ENCODE measurements at regions of chr4 and their contacts with region 1.

Region 1: DNA sequence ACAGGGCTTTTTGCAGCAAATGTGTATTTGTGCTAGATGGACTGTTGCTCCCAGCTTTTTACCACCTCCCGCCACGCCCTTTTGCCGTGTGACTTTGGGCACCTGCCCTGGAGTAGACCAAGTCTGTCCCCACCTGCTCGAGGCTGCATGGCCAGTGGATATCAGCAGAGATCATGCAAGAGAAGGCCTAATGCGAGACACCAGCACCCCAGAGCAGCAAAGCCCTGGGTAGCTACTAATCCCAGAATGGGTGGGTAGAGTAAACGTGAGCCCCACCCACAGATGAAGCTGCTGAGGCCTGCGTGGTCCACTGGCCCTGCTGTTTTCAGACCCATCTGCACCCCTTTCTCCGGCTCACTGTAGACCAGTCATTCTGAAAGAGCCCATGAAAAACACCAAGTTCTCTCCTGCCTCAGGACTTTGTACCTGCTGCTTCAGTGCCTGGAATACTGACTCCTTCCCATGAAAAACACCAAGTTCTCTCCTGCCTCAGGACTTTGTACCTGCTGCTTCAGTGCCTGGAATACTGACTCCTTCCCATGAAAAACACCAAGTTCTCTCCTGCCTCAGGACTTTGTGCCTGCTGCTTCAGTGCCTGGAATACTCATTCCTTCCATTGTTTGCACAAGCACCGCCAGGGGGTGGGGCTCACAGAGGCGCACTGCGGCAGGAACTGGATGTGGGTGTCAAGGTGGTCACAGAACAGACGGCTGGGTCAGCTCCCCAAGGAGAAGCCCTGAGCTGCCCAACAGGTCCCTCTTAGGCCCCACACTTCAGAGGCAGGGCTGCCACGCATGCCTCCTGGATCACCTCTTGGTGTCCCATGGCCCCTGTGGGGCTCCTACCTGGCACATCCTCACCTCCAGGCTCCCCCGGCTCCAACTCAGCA is 5.1 kb upstream of the TNIP2 start:
- DNase-seq: no peak
- ATAC-seq: peak in 1 of 4 donors; percentile 23
- H3K4me3 ChIP-seq: no peak overlapping the region
- H3K27ac ChIP-seq: no peak overlapping the region
- H3K4me1 ChIP-seq: peaks cover 0 to 20% (median 7%) of the 10 kb centered on the region in 12 donors
- H3K27me3 ChIP-seq: no peaks in the 10 kb centered on the region
- CTCF ChIP-seq: peak in 4 of 12 donors; percentile 7 to 28 (median 10)
- POLR2A ChIP-seq: no peak

Region 2: GRCh38 chr4:2806390-2807290 is 45.4 kb after region 1 on chr4:
- intact Hi-C with region 1: loop called in 1 of 10 experiments (anchors 5 kb)
- DNase-seq: peak; percentile 71 to 88 (median 82)
- ATAC-seq: peak; percentile 35 to 66 (median 52)
- H3K4me3 ChIP-seq: peak overlapping the region in 1 of 12 donors; percentile 12
- H3K27ac ChIP-seq: peak overlapping the region; percentile 59 to 86 (median 80)
- H3K4me1 ChIP-seq: peaks cover 35 to 93% (median 86%) of the 10 kb centered on the region in 12 donors
- H3K27me3 ChIP-seq: no peaks in the 10 kb centered on the region
- CTCF ChIP-seq: no peak
- POLR2A ChIP-seq: no peak

Region 3: DNA sequence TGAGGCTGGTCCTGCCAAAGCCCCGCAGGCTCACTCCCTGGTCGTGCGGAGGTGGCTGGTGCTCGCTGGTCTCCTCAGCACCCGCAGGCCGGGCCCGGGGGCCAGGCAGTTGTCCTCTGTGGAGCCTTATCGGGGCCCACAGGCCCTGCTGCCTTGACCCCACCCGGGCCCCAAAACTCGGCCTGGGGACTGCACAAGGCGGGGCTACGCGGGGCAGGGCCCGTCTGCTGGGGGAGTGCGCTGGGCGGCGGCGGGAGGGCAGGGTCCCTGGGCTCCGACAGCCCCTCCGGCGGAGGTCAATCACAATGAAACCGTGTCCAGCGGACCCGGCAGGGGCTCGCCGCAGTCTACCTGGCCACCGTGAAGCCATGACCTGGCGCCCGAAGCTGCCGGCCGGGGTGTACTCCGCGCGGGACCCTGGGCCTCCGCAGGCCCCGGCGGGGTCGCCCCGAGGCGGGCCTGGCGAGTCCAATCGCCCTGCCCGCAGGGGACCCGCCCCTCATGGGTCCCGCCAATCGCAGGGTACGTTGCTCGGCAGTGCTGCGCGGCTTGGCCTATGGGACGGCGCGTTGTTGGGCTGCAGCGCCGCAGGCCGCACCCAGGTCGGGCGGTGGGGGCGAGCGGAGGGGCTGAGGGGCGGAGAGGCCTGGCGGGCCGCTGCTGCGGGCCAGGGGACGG is 82.1 kb after region 1 on chr4 and contains the start of gene ADD1:
- intact Hi-C with region 1: loop called in 7 of 10 experiments (anchors 2 to 10 kb)
- DNase-seq: peak; percentile 93 to 97 (median 93)
- ATAC-seq: peak; percentile 98 to 99 (median 98)
- H3K4me3 ChIP-seq: peak within 1 kb of the TSS; percentile 60 to 98 (median 80)
- H3K27ac ChIP-seq: peak within 1 kb of the TSS; percentile 86 to 98 (median 96)
- H3K4me1 ChIP-seq: peaks cover 0 to 65% (median 36%) of the 10 kb centered on the region in 12 donors
- H3K27me3 ChIP-seq: no peaks in the 10 kb centered on the region
- CTCF ChIP-seq: no peak
- POLR2A ChIP-seq: peak; percentile 83 to 97
- total RNA-seq, gene ADD1: 179 to 275 (median 215) TPM

Region 4: DNA sequence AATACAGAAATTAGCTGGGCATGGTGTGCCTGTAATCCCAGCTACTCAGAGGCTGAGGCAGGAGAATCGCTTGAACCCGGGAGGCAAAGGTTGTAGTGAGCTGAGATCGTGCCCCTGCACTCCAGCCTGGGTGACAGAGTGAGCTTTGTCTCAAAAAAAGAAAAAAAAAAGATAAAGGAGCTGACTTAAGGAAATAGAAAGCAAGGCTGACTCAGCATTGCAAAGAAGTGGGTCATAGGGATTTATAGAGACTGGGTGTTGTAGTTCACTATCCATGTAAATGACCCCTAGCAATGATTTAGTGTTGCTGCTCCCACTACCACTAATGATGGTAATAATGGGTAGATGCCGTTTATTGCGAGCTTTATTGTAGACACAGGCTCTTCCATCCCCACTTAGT is 130.0 kb after region 1 on chr4:
- intact Hi-C with region 1: loop called in 2 of 10 experiments (anchors 5 to 10 kb)
- DNase-seq: no peak
- ATAC-seq: no peak
- H3K4me3 ChIP-seq: no peak overlapping the region
- H3K27ac ChIP-seq: peak overlapping the region in 1 of 12 donors; percentile 22
- H3K4me1 ChIP-seq: peaks cover 0 to 50% (median 27%) of the 10 kb centered on the region in 12 donors
- H3K27me3 ChIP-seq: no peaks in the 10 kb centered on the region
- CTCF ChIP-seq: no peak
- POLR2A ChIP-seq: no peak

Region 5: GRCh38 chr4:2934813-2935761 is 173.8 kb after region 1 on chr4:
- intact Hi-C with region 1: loop called (anchors 2 to 10 kb)
- DNase-seq: peak; percentile 94 to 98 (median 96)
- ATAC-seq: peak; percentile 54 to 84 (median 83)
- H3K4me3 ChIP-seq: peak overlapping the region; percentile 76 to 100 (median 89)
- H3K27ac ChIP-seq: peak overlapping the region; percentile 68 to 96 (median 88)
- H3K4me1 ChIP-seq: peaks cover 2 to 63% (median 42%) of the 10 kb centered on the region in 12 donors
- H3K27me3 ChIP-seq: no peaks in the 10 kb centered on the region
- CTCF ChIP-seq: peak in 2 of 12 donors; percentile 1 to 26
- POLR2A ChIP-seq: peak; percentile 24 to 92

Region 6: GRCh38 chr4:3041192-3042142 is 280.2 kb after region 1 on chr4:
- intact Hi-C with region 1: loop called in 5 of 10 experiments (anchors 5 to 10 kb)
- DNase-seq: peak; percentile 48 to 81 (median 67)
- ATAC-seq: peak; percentile 23 to 79 (median 58)
- H3K4me3 ChIP-seq: peak overlapping the region; percentile 19 to 63 (median 56)
- H3K27ac ChIP-seq: peak overlapping the region; percentile 36 to 88 (median 70)
- H3K4me1 ChIP-seq: peaks cover 0 to 62% (median 25%) of the 10 kb centered on the region in 12 donors
- H3K27me3 ChIP-seq: no peaks in the 10 kb centered on the region
- CTCF ChIP-seq: no peak
- POLR2A ChIP-seq: no peak